ENCODE measurements at regions of chr2 and their contacts with region 1.

Region 1: GRCh38 chr2:134232868-134233727 is 20.8 kb upstream of the MGAT5 start:
- DNase-seq: peak; percentile 52
- H3K4me3 Mint-ChIP-seq: peak overlapping the region; percentile 34
- H3K27ac Mint-ChIP-seq: peak overlapping the region; percentile 93
- H3K4me1 Mint-ChIP-seq: peaks cover 90% of the 10 kb centered on the region
- H3K27me3 Mint-ChIP-seq: no peaks in the 10 kb centered on the region

Region 2: DNA sequence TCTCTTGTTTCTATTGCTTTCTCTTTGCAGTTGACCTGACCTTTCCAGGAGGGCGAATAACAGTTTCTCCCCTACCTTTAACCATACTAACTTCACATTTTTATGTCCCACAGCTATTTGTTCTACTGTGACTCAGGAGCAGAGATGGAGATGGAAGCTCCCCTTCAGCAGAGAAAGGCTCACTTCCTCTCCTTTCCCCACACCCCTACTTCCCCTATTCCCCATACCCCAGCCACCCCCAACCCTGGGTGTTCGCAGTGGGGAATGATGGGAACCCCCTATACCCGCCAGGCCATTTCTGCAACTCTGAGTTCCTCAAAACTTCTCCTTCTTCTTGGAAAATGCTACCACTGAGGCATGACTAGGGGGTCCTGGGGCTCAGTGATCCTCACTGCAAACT is 264.7 kb before region 1 on chr2:
- CTCF ChIA-PET with region 1: no interaction called
- POLR2A ChIA-PET with region 1: no interaction called
- intact Hi-C with region 1: no loop called
- DNase-seq: no peak
- H3K4me3 Mint-ChIP-seq: no peak overlapping the region
- H3K27ac Mint-ChIP-seq: no peak overlapping the region
- H3K4me1 Mint-ChIP-seq: no peaks in the 10 kb centered on the region
- H3K27me3 Mint-ChIP-seq: peaks cover 8% of the 10 kb centered on the region

Region 3: DNA sequence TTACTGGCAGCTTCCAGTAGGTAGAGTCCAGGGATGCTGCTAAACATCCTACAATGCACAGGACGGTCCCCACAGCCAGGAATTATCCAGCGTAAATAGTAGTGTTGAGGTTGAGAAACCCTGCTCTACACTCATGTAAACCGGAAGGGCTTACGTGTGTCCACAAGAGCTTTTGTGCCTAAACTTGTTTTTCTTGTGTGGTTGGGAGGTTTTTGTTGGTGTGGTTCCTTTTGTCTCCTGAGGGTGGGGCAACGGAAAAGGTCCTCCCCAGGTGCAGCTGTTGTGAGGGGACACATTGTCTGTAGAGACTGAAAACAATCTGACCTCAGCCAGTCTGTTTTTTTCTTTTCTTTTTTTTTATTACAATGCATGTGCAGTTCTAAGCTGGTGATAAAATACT is 51.9 kb before region 1 on chr2:
- CTCF ChIA-PET with region 1: no interaction called
- POLR2A ChIA-PET with region 1: no interaction called
- intact Hi-C with region 1: no loop called
- DNase-seq: peak; percentile 51
- H3K4me3 Mint-ChIP-seq: no peak overlapping the region
- H3K27ac Mint-ChIP-seq: peak overlapping the region; percentile 47
- H3K4me1 Mint-ChIP-seq: peaks cover 87% of the 10 kb centered on the region
- H3K27me3 Mint-ChIP-seq: no peaks in the 10 kb centered on the region

Region 4: DNA sequence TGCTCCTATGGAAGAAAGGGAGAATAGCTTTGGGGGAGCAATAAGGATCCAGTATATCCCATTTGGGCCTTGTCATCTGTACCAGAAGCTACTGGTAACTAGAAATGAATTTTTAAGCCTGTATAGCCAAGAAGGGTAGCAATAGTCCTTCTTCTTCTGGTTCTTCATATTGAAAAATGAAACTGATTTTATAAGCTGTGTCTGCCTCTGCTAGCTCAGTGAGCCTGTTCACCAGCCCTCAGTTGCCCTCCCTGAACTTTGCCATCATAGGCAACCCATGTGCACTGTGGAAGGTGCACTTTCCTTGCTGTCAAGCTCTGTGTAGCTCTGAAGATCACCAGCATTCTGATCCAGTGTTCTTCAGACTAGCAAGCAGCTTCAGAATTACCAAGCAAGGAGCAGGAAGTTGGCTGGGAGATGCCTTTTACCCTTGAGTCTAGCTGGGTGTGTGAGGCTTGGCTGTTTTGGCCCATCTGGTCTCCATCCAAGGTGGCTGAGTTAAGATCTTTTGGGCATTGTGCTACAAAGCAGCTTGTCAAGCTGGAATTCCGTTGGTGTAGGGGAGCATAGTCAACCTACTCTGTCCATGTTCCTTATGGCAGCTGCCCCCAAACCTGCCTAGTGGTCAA is 35.0 kb before region 1 on chr2:
- CTCF ChIA-PET with region 1: interaction called, 6 read pairs
- POLR2A ChIA-PET with region 1: no interaction called
- intact Hi-C with region 1: loop called (anchors 1 kb)
- DNase-seq: no peak
- H3K4me3 Mint-ChIP-seq: peak overlapping the region; percentile 36
- H3K27ac Mint-ChIP-seq: peak overlapping the region; percentile 79
- H3K4me1 Mint-ChIP-seq: peaks cover 84% of the 10 kb centered on the region
- H3K27me3 Mint-ChIP-seq: no peaks in the 10 kb centered on the region

Region 5: GRCh38 chr2:134245340-134245984 is 12.4 kb after region 1 on chr2:
- CTCF ChIA-PET with region 1: interaction called, 82 read pairs
- POLR2A ChIA-PET with region 1: interaction called, 4 read pairs
- intact Hi-C with region 1: loop called (anchors 1 kb)
- DNase-seq: peak; percentile 82
- H3K4me3 Mint-ChIP-seq: no peak overlapping the region
- H3K27ac Mint-ChIP-seq: no peak overlapping the region
- H3K4me1 Mint-ChIP-seq: peaks cover 82% of the 10 kb centered on the region
- H3K27me3 Mint-ChIP-seq: peaks cover 2% of the 10 kb centered on the region

Region 6: GRCh38 chr2:134301099-134301927 is 68.2 kb after region 1 on chr2:
- CTCF ChIA-PET with region 1: interaction called, 3 read pairs
- POLR2A ChIA-PET with region 1: no interaction called
- intact Hi-C with region 1: loop called (anchors 1 kb)
- DNase-seq: no peak
- H3K4me3 Mint-ChIP-seq: no peak overlapping the region
- H3K27ac Mint-ChIP-seq: no peak overlapping the region
- H3K4me1 Mint-ChIP-seq: peaks cover 49% of the 10 kb centered on the region
- H3K27me3 Mint-ChIP-seq: no peaks in the 10 kb centered on the region

Region 7: GRCh38 chr2:134683561-134684112 is 450.5 kb after region 1 on chr2:
- CTCF ChIA-PET with region 1: no interaction called
- POLR2A ChIA-PET with region 1: no interaction called
- intact Hi-C with region 1: loop called (anchors 5 kb)
- DNase-seq: peak; percentile 59
- H3K4me3 Mint-ChIP-seq: no peak overlapping the region
- H3K27ac Mint-ChIP-seq: no peak overlapping the region
- H3K4me1 Mint-ChIP-seq: peaks cover 46% of the 10 kb centered on the region
- H3K27me3 Mint-ChIP-seq: peaks cover 9% of the 10 kb centered on the region

Region 8: DNA sequence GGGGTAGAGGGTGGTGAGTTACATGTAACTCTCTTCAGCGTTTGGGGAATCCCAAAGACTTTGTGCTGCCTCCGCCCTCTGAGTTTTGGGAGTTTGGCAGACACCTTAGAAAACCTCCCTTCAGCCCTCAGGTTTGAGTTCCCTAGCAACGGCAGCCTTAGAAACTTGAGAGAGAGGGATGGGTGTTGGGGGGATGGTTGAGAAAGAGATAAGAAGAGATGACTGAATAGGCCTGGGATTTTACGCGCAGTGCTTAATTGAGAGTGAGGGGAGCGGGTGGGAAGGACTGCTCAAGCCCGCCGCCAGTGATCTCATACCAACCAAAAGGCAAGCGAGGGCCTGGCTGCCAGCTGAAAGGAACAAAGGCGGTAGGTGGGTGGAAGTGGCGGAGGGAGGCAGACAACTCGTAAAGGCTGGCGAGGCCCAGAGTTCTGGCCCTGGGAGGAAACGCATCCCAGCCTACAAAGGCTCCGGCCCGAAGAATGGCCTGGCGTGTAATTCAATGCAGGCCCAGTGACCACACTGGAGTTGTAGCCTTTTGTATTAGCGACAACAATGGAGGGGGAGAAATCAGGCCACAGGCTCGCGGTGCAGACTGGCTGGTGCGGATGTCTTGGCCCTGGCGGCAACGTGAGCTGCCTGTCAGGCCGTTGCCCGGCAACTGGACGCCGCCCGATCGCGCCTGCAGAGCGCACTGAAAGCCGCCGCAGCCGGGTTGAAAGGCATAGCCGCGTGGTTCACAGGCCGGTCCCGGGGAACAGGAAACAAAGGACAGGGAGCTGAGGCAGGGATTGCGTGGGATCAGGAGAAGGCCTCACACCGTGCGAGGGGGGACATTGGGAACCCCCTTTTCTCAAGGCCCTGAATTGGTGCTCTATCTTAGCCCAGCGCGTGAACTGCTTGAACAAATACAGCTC is 1792.2 kb after region 1 on chr2:
- CTCF ChIA-PET with region 1: no interaction called
- POLR2A ChIA-PET with region 1: no interaction called
- intact Hi-C with region 1: no loop called
- DNase-seq: peak; percentile 38
- H3K4me3 Mint-ChIP-seq: no peak overlapping the region
- H3K27ac Mint-ChIP-seq: no peak overlapping the region
- H3K4me1 Mint-ChIP-seq: no peaks in the 10 kb centered on the region
- H3K27me3 Mint-ChIP-seq: no peaks in the 10 kb centered on the region